Activated B cell treated with CpG ODN at 0.5 μM for 24 hours (primary cell): ENCODE measurements at regions of chr14 and their contacts with region 1.

Region 1: DNA sequence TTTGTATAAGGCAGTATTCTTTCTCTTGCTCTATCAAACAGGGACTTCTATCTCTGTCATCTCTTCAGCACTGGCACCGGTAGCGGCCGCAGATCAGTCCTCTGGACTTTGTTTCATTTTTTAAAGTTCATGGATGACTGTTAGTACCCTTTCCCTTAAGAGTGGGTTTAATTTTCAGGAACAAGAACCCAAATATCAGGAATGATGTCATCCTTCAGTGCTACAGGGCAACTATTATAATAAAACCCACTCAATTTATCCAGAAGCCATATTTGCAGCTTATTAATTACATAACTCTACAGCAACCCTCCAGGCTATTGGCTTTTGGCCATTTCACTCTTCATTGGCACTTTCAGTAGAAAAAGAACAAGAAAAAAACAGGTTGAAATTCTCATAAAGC is 45.9 kb downstream of the OTX2 start:
- DNase-seq: no peak
- ATAC-seq: no peak
- H3K4me3 Mint-ChIP-seq: no peak overlapping the region
- H3K27ac Mint-ChIP-seq: no peak overlapping the region
- H3K4me1 Mint-ChIP-seq: no peaks in the 10 kb centered on the region
- H3K27me3 Mint-ChIP-seq: peaks cover 2% of the 10 kb centered on the region
- CTCF ChIP-seq: no peak

Region 2: GRCh38 chr14:56730538-56731145 is 33.7 kb before region 1 on chr14:
- CTCF ChIA-PET with region 1: no interaction called
- POLR2A ChIA-PET with region 1: interaction called, 11 read pairs
- intact Hi-C with region 1: no loop called
- DNase-seq: no peak
- ATAC-seq: no peak
- H3K4me3 Mint-ChIP-seq: no peak overlapping the region
- H3K27ac Mint-ChIP-seq: no peak overlapping the region
- H3K4me1 Mint-ChIP-seq: no peaks in the 10 kb centered on the region
- H3K27me3 Mint-ChIP-seq: peaks cover 28% of the 10 kb centered on the region
- CTCF ChIP-seq: no peak

Region 3: DNA sequence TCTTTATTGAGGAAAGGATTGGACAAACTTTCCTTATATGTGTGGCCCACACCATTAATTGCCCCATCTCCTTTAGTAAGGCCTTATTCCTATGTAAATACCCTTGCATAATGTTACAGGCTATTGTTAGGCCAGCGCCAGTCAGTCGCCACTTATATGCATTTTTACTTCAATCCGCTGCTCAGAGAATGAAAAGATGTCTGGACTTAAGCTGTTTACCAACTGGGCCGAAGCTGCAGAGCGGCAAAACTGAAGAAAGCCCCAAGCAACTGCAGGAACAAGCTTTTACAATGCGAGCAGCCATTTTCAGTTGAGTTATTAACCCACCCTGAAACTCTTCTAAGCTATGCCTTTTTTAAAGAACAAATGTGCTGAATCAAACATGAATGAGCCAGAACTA is 138.0 kb after region 1 on chr14:
- CTCF ChIA-PET with region 1: no interaction called
- POLR2A ChIA-PET with region 1: no interaction called
- intact Hi-C with region 1: no loop called
- DNase-seq: no peak
- ATAC-seq: no peak
- H3K4me3 Mint-ChIP-seq: no peak overlapping the region
- H3K27ac Mint-ChIP-seq: no peak overlapping the region
- H3K4me1 Mint-ChIP-seq: no peaks in the 10 kb centered on the region
- H3K27me3 Mint-ChIP-seq: peaks cover 7% of the 10 kb centered on the region
- CTCF ChIP-seq: no peak